Activated CD4-positive, alpha-beta T cell treated with anti-CD3 and anti-CD28 coated beads for 36 hours (primary cell): ENCODE measurements at regions of chr9 and their contacts with region 1.

Region 1: GRCh38 chr9:99253772-99254431 is 31.8 kb downstream of the SEC61B start:
- DNase-seq: peak; percentile 95
- ATAC-seq: peak; percentile 83
- H3K4me3 Mint-ChIP-seq: peak overlapping the region; percentile 58
- H3K27ac Mint-ChIP-seq: peak overlapping the region; percentile 95
- H3K4me1 Mint-ChIP-seq: peaks cover 60% of the 10 kb centered on the region
- H3K27me3 Mint-ChIP-seq: peaks cover 5% of the 10 kb centered on the region

Region 2: GRCh38 chr9:98315551-98316060 is 938.3 kb before region 1 on chr9:
- CTCF ChIA-PET with region 1: no interaction called
- POLR2A ChIA-PET with region 1: no interaction called
- intact Hi-C with region 1: no loop called
- DNase-seq: peak; percentile 90
- ATAC-seq: peak; percentile 96
- H3K4me3 Mint-ChIP-seq: no peak overlapping the region
- H3K27ac Mint-ChIP-seq: no peak overlapping the region
- H3K4me1 Mint-ChIP-seq: no peaks in the 10 kb centered on the region
- H3K27me3 Mint-ChIP-seq: no peaks in the 10 kb centered on the region

Region 3: GRCh38 chr9:98944057-98944733 is 309.7 kb before region 1 on chr9:
- CTCF ChIA-PET with region 1: no interaction called
- POLR2A ChIA-PET with region 1: no interaction called
- intact Hi-C with region 1: no loop called
- DNase-seq: peak; percentile 19
- ATAC-seq: no peak
- H3K4me3 Mint-ChIP-seq: peak overlapping the region; percentile 46
- H3K27ac Mint-ChIP-seq: no peak overlapping the region
- H3K4me1 Mint-ChIP-seq: peaks cover 6% of the 10 kb centered on the region
- H3K27me3 Mint-ChIP-seq: peaks cover 53% of the 10 kb centered on the region

Region 4: GRCh38 chr9:99104459-99105151 is 149.3 kb before region 1 on chr9 and contains the start of gene TGFBR1:
- CTCF ChIA-PET with region 1: no interaction called
- POLR2A ChIA-PET with region 1: no interaction called
- intact Hi-C with region 1: loop called in 1 of 2 experiments (anchors 5 kb)
- DNase-seq: peak; percentile 95
- ATAC-seq: peak; percentile 89
- H3K4me3 Mint-ChIP-seq: peak within 1 kb of the TSS; percentile 79
- H3K27ac Mint-ChIP-seq: peak within 1 kb of the TSS; percentile 83
- H3K4me1 Mint-ChIP-seq: peaks cover 49% of the 10 kb centered on the region
- H3K27me3 Mint-ChIP-seq: no peaks in the 10 kb centered on the region
- total RNA-seq, gene TGFBR1: 18.6 to 19.3 TPM

Region 5: DNA sequence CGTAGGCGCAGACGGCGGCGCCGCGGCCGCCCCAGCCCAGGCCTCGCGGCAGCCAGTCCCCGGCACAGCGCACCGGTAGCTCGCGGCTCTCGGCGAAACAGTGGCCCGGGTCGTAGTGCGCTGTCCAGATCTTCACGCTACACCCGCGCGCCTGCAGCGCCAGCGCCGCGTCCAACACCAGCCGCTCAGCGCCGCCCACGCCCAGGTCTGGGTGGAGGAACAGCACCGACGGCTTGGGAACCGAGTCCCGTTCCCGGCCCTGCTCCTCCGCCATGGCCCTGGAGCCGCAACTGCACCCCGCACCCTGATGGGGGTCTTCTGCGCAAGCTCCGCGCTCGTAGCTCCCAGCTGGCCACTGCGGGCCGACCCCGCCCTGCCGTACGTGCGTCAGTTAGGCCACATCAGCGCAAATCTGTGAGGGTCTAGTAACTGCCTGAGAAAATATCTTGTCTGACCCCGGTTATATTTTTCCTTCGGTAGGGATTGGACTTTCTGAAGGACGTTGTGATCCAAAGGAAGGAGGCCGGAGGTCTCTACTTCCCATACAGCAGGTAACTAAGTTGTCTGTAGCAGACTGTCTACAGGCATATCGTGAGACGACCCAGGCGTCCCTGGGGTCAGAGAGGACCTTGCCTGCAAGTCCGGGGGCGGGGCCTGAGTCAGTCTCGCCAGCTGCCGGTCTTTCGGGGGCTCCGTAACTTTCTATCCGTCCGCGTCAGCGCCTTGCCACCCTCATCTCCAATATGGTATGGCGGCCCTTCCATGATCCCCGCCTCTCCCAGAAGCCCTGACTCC is 32.1 kb before region 1 on chr9 and contains the starts of genes ALG2 and SEC61B:
- CTCF ChIA-PET with region 1: interaction called, 6 read pairs
- POLR2A ChIA-PET with region 1: interaction called, 5 read pairs
- intact Hi-C with region 1: loop called (anchors 1 kb)
- DNase-seq: peak; percentile 97
- ATAC-seq: peak; percentile 94
- H3K4me3 Mint-ChIP-seq: peak within 1 kb of the TSS; percentile 99
- H3K27ac Mint-ChIP-seq: peak within 1 kb of the TSS; percentile 99
- H3K4me1 Mint-ChIP-seq: peaks cover 67% of the 10 kb centered on the region
- H3K27me3 Mint-ChIP-seq: no peaks in the 10 kb centered on the region
- total RNA-seq, gene ALG2: 22.8 to 31.1 TPM
- total RNA-seq, gene SEC61B: 81.0 to 139 TPM

Region 6: GRCh38 chr9:99239341-99240060 is 14.4 kb before region 1 on chr9:
- CTCF ChIA-PET with region 1: interaction called, 3 read pairs
- POLR2A ChIA-PET with region 1: no interaction called
- intact Hi-C with region 1: loop called in 1 of 2 experiments (anchors 2 kb)
- DNase-seq: no peak
- ATAC-seq: no peak
- H3K4me3 Mint-ChIP-seq: no peak overlapping the region
- H3K27ac Mint-ChIP-seq: no peak overlapping the region
- H3K4me1 Mint-ChIP-seq: peaks cover 33% of the 10 kb centered on the region
- H3K27me3 Mint-ChIP-seq: no peaks in the 10 kb centered on the region

Region 7: GRCh38 chr9:99377790-99378775 is 124.2 kb after region 1 on chr9:
- CTCF ChIA-PET with region 1: no interaction called
- POLR2A ChIA-PET with region 1: no interaction called
- intact Hi-C with region 1: no loop called
- DNase-seq: no peak
- ATAC-seq: no peak
- H3K4me3 Mint-ChIP-seq: no peak overlapping the region
- H3K27ac Mint-ChIP-seq: no peak overlapping the region
- H3K4me1 Mint-ChIP-seq: no peaks in the 10 kb centered on the region
- H3K27me3 Mint-ChIP-seq: peaks cover 12% of the 10 kb centered on the region

Region 8: GRCh38 chr9:99400184-99400731 is 146.4 kb after region 1 on chr9:
- CTCF ChIA-PET with region 1: no interaction called
- POLR2A ChIA-PET with region 1: no interaction called
- intact Hi-C with region 1: no loop called
- DNase-seq: no peak
- ATAC-seq: no peak
- H3K4me3 Mint-ChIP-seq: no peak overlapping the region
- H3K27ac Mint-ChIP-seq: no peak overlapping the region
- H3K4me1 Mint-ChIP-seq: no peaks in the 10 kb centered on the region
- H3K27me3 Mint-ChIP-seq: peaks cover 3% of the 10 kb centered on the region

Region 9: GRCh38 chr9:99906403-99907207 is 652.7 kb after region 1 on chr9 and contains the start of gene STX17:
- CTCF ChIA-PET with region 1: no interaction called
- POLR2A ChIA-PET with region 1: no interaction called
- intact Hi-C with region 1: loop called in 1 of 2 experiments (anchors 5 kb)
- DNase-seq: peak; percentile 85
- ATAC-seq: peak; percentile 92
- H3K4me3 Mint-ChIP-seq: peak within 1 kb of the TSS; percentile 97
- H3K27ac Mint-ChIP-seq: peak within 1 kb of the TSS; percentile 96
- H3K4me1 Mint-ChIP-seq: peaks cover 26% of the 10 kb centered on the region
- H3K27me3 Mint-ChIP-seq: peaks cover 2% of the 10 kb centered on the region
- total RNA-seq, gene STX17: 32.8 to 35.2 TPM